AG04450 (cell line): ENCODE measurements at regions of chr19 and their contacts with region 1.

Region 1: GRCh38 chr19:40139533-40140287 is 49.0 kb upstream of the ZNF780A start:
- DNase-seq: peak; percentile 15
- H3K4me3 ChIP-seq: no peak overlapping the region
- H3K27ac ChIP-seq: no peak overlapping the region
- H3K27me3 ChIP-seq: peaks cover 8% of the 10 kb centered on the region
- CTCF ChIP-seq: peak; percentile 77

Region 2: GRCh38 chr19:40119380-40119779 is 20.3 kb before region 1 on chr19:
- CTCF ChIA-PET with region 1: no interaction called
- POLR2A ChIA-PET with region 1: no interaction called
- DNase-seq: no peak
- H3K4me3 ChIP-seq: no peak overlapping the region
- H3K27ac ChIP-seq: no peak overlapping the region
- H3K27me3 ChIP-seq: no peaks in the 10 kb centered on the region
- CTCF ChIP-seq: no peak

Region 3: DNA sequence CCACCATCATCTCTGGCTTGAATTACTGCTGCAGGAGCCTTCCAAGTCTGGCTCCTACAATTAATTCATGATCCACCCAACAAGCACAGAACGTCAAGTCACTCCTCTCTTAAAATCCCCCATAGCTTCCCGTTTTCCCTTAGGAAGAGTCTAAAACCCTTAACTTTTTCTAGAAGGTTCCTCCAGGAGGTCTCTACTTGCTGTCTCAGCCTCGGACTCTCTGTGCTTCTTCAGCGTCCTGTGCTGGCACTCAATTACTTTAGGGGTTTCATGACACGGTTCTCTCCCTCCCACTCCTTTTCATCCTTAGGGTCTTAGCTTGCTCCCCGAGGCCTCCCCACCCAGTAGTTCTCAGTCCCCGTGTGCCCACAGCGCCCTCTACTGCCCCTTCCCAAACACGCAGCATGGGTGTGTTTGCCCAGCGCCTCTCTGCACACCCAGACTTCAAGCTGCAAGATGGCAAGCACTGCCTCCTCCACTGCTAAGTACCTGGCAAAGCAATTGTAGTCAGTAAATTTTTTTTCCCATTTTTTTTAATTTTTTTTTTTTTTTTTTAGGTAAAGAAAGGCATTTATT is 25.7 kb after region 1 on chr19:
- CTCF ChIA-PET with region 1: interaction called, 11 read pairs
- POLR2A ChIA-PET with region 1: no interaction called
- DNase-seq: no peak
- H3K4me3 ChIP-seq: no peak overlapping the region
- H3K27ac ChIP-seq: no peak overlapping the region
- H3K27me3 ChIP-seq: no peaks in the 10 kb centered on the region
- CTCF ChIP-seq: peak; percentile 64